Body of pancreas (tissue), 4 donors: ENCODE measurements at regions of chr13 and their contacts with region 1.

Region 1: GRCh38 chr13:73708393-73708985 is 425.7 kb downstream of the KLF12 start:
- DNase-seq: peak; percentile 50 to 67 (median 59)
- ATAC-seq: peak; percentile 66
- H3K4me3 ChIP-seq: no peak overlapping the region
- H3K27ac ChIP-seq: no peak overlapping the region
- H3K4me1 ChIP-seq: no peaks in the 10 kb centered on the region
- H3K27me3 ChIP-seq: no peaks in the 10 kb centered on the region
- CTCF ChIP-seq: peak; percentile 71 to 92 (median 83)
- POLR2A ChIP-seq: no peak

Region 2: GRCh38 chr13:72839831-72840426 is 868.6 kb before region 1 on chr13:
- intact Hi-C with region 1: loop called (anchors 10 kb)
- DNase-seq: peak; percentile 61 to 76 (median 64)
- ATAC-seq: peak; percentile 83
- H3K4me3 ChIP-seq: no peak overlapping the region
- H3K27ac ChIP-seq: no peak overlapping the region
- H3K4me1 ChIP-seq: no peaks in the 10 kb centered on the region
- H3K27me3 ChIP-seq: no peaks in the 10 kb centered on the region
- CTCF ChIP-seq: peak; percentile 61 to 76 (median 71)
- POLR2A ChIP-seq: no peak

Region 3: DNA sequence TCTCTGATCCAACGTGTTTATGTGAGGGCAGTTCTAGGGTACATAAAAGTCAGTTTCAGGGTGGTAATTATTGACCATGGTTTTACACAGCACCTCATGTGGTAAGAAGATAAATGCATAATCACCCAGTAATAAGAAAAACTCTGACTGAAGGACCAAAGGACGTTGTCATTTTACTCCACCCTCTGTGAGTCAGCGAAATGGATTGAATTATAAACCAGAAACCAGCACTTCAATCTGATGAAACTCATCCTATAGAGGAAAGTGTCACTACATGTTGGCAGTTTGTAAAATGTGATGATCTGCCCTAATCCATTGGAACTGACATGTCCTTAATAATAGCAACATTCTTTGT is 242.9 kb before region 1 on chr13:
- intact Hi-C with region 1: no loop called
- DNase-seq: no peak
- ATAC-seq: no peak
- H3K4me3 ChIP-seq: no peak overlapping the region
- H3K27ac ChIP-seq: no peak overlapping the region
- H3K4me1 ChIP-seq: no peaks in the 10 kb centered on the region
- H3K27me3 ChIP-seq: no peaks in the 10 kb centered on the region
- CTCF ChIP-seq: no peak
- POLR2A ChIP-seq: no peak